Ascending aorta (tissue), 2 donors: ENCODE measurements at regions of chr4 and their contacts with region 1.

Region 1: DNA sequence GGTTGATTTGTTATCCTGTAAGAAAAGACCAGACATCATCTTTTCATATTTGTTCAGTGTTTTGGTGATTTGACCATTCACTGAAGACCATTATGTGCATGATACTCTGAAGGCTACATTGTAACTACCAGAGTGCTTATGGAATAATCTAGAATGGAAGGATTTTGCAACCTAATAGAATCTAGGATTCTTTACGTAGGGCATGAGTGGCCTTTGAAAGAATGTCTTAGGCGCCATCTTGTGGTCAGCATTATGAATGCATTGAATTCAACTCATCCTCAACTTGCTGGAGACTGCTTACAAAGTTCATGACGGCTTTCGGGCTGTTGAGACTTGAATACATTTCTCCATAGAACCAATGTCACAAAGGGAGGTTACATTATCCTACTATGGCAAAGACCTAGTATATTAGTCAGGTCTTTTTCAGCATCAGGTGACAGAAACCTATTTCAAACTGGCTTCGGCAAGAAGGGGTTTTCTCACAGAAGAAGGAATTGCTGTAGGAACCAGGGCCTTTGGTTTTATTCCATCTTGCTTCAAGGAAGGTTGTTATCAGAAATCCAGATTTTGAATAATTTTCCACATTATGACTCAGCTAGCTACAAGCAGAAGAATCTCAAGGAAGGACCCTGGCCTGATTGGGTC is 104.1 kb downstream of the GPAT3 start:
- DNase-seq: peak in 1 of 2 donors; percentile 80
- H3K4me3 ChIP-seq: no peak overlapping the region
- H3K27ac ChIP-seq: no peak overlapping the region
- H3K4me1 ChIP-seq: peaks cover 0 to 3% of the 10 kb centered on the region in 2 donors
- H3K27me3 ChIP-seq: no peaks in the 10 kb centered on the region
- CTCF ChIP-seq: peak; percentile 44 to 76 (median 75)

Region 2: DNA sequence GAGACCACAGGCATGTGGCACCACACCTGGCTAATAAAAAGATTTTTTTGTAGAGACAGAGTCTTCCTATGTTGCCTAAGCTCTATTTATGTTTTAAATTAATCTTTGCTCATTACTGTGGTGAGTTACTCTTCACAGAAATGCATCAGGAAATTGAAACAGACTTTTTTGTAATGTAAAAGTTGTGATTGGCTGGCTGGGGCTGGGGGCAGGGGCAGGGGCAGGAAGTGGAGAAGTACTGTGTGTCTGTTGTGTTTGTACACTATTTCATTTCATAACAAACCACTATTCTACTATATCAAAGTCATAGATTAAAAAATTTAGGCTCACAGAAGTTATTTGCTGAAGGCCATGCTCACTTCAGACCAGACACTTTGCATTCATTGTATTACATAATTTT is 136.0 kb before region 1 on chr4:
- intact Hi-C with region 1: loop called (anchors 1 kb)
- DNase-seq: no peak
- H3K4me3 ChIP-seq: no peak overlapping the region
- H3K27ac ChIP-seq: no peak overlapping the region
- H3K4me1 ChIP-seq: no peaks in the 10 kb centered on the region
- H3K27me3 ChIP-seq: no peaks in the 10 kb centered on the region
- CTCF ChIP-seq: no peak

Region 3: GRCh38 chr4:84503495-84504437 is 863.8 kb after region 1 on chr4:
- intact Hi-C with region 1: loop called (anchors 10 kb)
- DNase-seq: no peak
- H3K4me3 ChIP-seq: no peak overlapping the region
- H3K27ac ChIP-seq: no peak overlapping the region
- H3K4me1 ChIP-seq: peaks cover 5 to 12% of the 10 kb centered on the region in 2 donors
- H3K27me3 ChIP-seq: peaks cover 21% of the 10 kb centered on the region
- CTCF ChIP-seq: peak; percentile 16 to 46 (median 36)